ENCODE measurements at regions of chr21 and their contacts with region 1.

Region 1: GRCh38 chr21:35528116-35529042 is 479.3 kb upstream of the RUNX1 start:
- DNase-seq: peak; percentile 79
- ATAC-seq: peak; percentile 88
- H3K4me3 Mint-ChIP-seq: peak overlapping the region; percentile 75
- H3K27ac Mint-ChIP-seq: peak overlapping the region; percentile 93
- H3K4me1 Mint-ChIP-seq: peaks cover 44% of the 10 kb centered on the region
- H3K27me3 Mint-ChIP-seq: no peaks in the 10 kb centered on the region

Region 2: DNA sequence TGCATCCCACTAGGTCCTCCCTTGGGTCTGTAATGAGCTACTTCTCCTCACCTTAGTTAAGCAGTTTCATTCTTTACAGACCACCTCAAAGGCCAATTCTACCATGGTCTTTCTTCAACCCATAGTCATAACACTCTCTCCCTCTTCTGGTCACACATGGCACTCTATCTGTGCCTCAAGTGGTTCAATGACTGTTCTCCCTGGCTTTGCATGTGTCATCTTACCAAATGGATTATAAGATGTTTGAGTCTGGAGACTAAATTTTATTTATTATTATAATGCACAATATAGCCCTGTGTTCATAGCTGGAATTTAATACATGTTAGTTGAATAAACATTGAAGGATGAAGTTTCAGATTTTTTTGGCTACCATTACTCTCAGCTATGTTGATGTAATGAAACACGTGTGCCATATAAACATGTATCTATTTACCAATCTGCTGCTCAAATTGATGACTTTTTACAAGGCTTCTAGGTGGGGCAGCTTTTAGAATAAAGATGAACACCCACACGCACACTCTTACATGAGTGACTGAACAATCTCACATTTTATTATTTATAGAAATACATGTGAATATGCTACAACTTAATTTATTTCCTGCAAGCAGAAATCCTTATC is 581.4 kb before region 1 on chr21:
- CTCF ChIA-PET with region 1: no interaction called
- POLR2A ChIA-PET with region 1: no interaction called
- intact Hi-C with region 1: loop called in 1 of 2 experiments (anchors 5 kb)
- DNase-seq: no peak
- ATAC-seq: peak; percentile 65
- H3K4me3 Mint-ChIP-seq: peak overlapping the region; percentile 13
- H3K27ac Mint-ChIP-seq: peak overlapping the region; percentile 95
- H3K4me1 Mint-ChIP-seq: peaks cover 92% of the 10 kb centered on the region
- H3K27me3 Mint-ChIP-seq: no peaks in the 10 kb centered on the region

Region 3: GRCh38 chr21:35428489-35428888 is 99.9 kb before region 1 on chr21:
- CTCF ChIA-PET with region 1: no interaction called
- POLR2A ChIA-PET with region 1: no interaction called
- intact Hi-C with region 1: loop called in 1 of 2 experiments (anchors 5 kb)
- DNase-seq: peak; percentile 47
- ATAC-seq: peak; percentile 74
- H3K4me3 Mint-ChIP-seq: peak overlapping the region; percentile 39
- H3K27ac Mint-ChIP-seq: peak overlapping the region; percentile 75
- H3K4me1 Mint-ChIP-seq: peaks cover 27% of the 10 kb centered on the region
- H3K27me3 Mint-ChIP-seq: peaks cover 5% of the 10 kb centered on the region

Region 4: GRCh38 chr21:35540950-35541638 is 12.7 kb after region 1 on chr21:
- CTCF ChIA-PET with region 1: no interaction called
- POLR2A ChIA-PET with region 1: no interaction called
- intact Hi-C with region 1: no loop called
- DNase-seq: no peak
- ATAC-seq: no peak
- H3K4me3 Mint-ChIP-seq: no peak overlapping the region
- H3K27ac Mint-ChIP-seq: no peak overlapping the region
- H3K4me1 Mint-ChIP-seq: peaks cover 2% of the 10 kb centered on the region
- H3K27me3 Mint-ChIP-seq: peaks cover 2% of the 10 kb centered on the region

Region 5: DNA sequence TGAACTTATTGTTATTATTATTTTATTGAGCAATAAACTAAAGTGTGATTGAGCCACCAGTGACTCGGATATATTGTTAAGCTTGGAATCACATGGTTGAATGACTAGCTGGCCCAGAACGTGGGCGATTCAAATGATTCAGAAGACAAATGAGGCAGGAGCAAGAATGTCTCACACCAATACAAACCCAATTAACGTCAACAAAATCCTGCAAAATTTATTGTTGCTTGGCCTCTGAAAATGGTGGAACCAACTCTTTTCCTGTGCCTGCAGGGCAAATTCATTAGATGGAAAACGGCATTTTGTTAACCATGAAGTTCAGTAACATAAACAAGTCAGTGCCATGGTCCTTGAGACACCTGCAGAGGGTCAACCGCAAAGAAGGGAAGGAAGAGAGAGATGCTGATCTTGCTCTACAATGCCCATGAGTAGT is 50.0 kb after region 1 on chr21:
- CTCF ChIA-PET with region 1: no interaction called
- POLR2A ChIA-PET with region 1: no interaction called
- intact Hi-C with region 1: loop called in 1 of 2 experiments (anchors 1 kb)
- DNase-seq: no peak
- ATAC-seq: no peak
- H3K4me3 Mint-ChIP-seq: no peak overlapping the region
- H3K27ac Mint-ChIP-seq: peak overlapping the region; percentile 89
- H3K4me1 Mint-ChIP-seq: peaks cover 27% of the 10 kb centered on the region
- H3K27me3 Mint-ChIP-seq: peaks cover 10% of the 10 kb centered on the region

Region 6: DNA sequence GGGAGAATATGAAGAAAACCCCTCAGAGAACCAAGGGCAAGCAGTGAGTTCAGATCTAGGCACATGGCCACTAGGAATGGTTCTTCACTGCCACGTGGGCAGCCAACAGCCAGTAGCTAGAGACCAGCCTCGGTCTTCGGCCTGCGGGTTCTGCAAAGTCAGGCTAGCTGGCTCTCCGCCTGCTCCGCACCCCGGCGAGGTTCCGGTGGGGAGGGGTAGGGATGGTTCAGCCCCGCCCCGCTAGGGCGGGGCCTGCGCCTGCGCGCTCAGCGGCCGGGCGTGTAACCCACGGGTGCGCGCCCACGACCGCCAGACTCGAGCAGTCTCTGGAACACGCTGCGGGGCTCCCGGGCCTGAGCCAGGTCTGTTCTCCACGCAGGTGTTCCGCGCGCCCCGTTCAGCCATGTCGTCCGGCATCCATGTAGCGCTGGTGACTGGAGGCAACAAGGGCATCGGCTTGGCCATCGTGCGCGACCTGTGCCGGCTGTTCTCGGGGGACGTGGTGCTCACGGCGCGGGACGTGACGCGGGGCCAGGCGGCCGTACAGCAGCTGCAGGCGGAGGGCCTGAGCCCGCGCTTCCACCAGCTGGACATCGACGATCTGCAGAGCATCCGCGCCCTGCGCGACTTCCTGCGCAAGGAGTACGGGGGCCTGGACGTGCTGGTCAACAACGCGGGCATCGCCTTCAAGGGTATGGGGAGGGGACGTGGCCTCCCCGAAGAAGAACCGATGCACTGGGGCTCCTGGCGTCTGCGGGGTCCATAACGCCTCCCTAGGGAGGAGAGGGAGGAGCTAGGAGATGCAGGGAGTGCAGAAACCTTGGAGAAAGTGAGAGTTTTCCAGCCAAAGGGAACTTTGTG is 541.6 kb after region 1 on chr21 and contains the start of gene CBR1:
- CTCF ChIA-PET with region 1: no interaction called
- POLR2A ChIA-PET with region 1: no interaction called
- intact Hi-C with region 1: loop called in 1 of 2 experiments (anchors 1 kb)
- DNase-seq: peak; percentile 94
- ATAC-seq: peak; percentile 98
- H3K4me3 Mint-ChIP-seq: peak within 1 kb of the TSS; percentile 83
- H3K27ac Mint-ChIP-seq: peak within 1 kb of the TSS; percentile 88
- H3K4me1 Mint-ChIP-seq: peaks cover 41% of the 10 kb centered on the region
- H3K27me3 Mint-ChIP-seq: no peaks in the 10 kb centered on the region
- total RNA-seq, gene CBR1: 48.6 to 54.1 TPM

Measured in activated CD4-positive, alpha-beta T cell treated with anti-CD3 and anti-CD28 coated beads for 36 hours (primary cell).